H1 (cell line): ENCODE measurements at regions of chr10 and their contacts with region 1.

Region 1: GRCh38 chr10:63629363-63630084 is 108.3 kb downstream of the REEP3 start:
- DNase-seq: peak; percentile 90 to 96
- H3K4me3 ChIP-seq: peak overlapping the region; percentile 60 to 80 (median 72)
- H3K27ac ChIP-seq: peak overlapping the region; percentile 91
- H3K4me1 ChIP-seq: peaks cover 11 to 16% (median 13%) of the 10 kb centered on the region in 4 experiments; a peak in 6 of 7 replicates
- H3K27me3 ChIP-seq: no peaks in the 10 kb centered on the region
- CTCF ChIP-seq: peak; percentile 81 to 96 (median 92)
- EP300 ChIP-seq: peak in 1 of 2 experiments; percentile 5; a peak in 1 of 3 replicates
- POLR2A ChIP-seq: peak in 1 of 2 experiments; percentile 15; a peak in 1 of 3 replicates
- RAD21 ChIP-seq: peak; percentile 94 to 95

Region 2: GRCh38 chr10:63166742-63167258 is 462.7 kb before region 1 on chr10:
- CTCF ChIA-PET with region 1: interaction called, 41 read pairs
- POLR2A ChIA-PET with region 1: interaction called, 20 read pairs
- DNase-seq: no peak
- H3K4me3 ChIP-seq: no peak overlapping the region
- H3K27ac ChIP-seq: no peak overlapping the region
- H3K4me1 ChIP-seq: no peaks in the 10 kb centered on the region
- H3K27me3 ChIP-seq: no peaks in the 10 kb centered on the region
- CTCF ChIP-seq: peak in 2 of 3 experiments; percentile 55 to 72; a peak in 3 of 4 replicates
- EP300 ChIP-seq: no peak
- POLR2A ChIP-seq: peak in 1 of 2 experiments; percentile 57; a peak in 2 of 3 replicates
- RAD21 ChIP-seq: peak; percentile 69 to 72

Region 3: DNA sequence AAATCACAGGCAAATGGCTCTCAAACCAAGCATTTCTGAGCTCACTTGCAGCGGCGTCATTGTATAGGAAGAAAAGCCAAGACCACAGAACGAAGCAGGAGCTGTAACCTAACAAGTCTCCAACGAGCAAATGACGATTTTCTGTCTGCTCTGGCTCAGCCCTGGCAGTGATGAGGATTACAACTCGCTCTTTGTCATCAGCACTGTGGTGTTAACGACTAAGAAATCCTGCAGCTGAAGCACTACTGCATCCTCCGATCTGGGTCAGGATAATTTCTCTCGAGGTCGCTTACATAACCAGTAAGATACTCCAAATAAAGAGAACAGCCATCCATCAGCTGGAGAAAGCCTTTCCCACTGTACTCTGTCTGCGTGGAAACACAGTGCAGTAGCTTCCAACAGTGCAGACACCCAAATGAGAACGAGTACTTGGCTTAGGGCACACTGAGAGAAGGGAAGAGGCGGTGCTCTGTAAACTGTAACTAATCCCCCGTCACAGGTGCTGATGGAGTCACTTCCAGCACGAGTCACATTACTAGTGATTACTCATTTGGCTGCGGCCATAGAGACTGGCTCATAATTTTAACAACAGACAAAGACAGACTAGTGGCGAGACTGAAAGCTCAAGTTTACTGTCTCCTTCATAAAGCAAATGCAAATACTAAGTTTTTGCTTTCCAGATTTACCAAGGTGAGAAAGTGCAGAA is 360.6 kb before region 1 on chr10:
- CTCF ChIA-PET with region 1: interaction called, 7 read pairs
- POLR2A ChIA-PET with region 1: interaction called, 44 read pairs
- DNase-seq: peak; percentile 51 to 68
- H3K4me3 ChIP-seq: peak overlapping the region; percentile 78 to 96 (median 82)
- H3K27ac ChIP-seq: peak overlapping the region; percentile 83
- H3K4me1 ChIP-seq: no peaks in the 10 kb centered on the region; a peak in 1 of 7 replicates
- H3K27me3 ChIP-seq: no peaks in the 10 kb centered on the region
- CTCF ChIP-seq: no peak
- EP300 ChIP-seq: no peak
- POLR2A ChIP-seq: peak; percentile 88 to 97
- RAD21 ChIP-seq: no peak; a peak in 1 of 4 replicates

Region 4: GRCh38 chr10:63521416-63522276 is 107.9 kb before region 1 on chr10:
- CTCF ChIA-PET with region 1: interaction called, 26 read pairs
- POLR2A ChIA-PET with region 1: interaction called, 22 read pairs
- DNase-seq: peak in 1 of 2 experiments; percentile 85
- H3K4me3 ChIP-seq: peak overlapping the region; percentile 73 to 86 (median 82)
- H3K27ac ChIP-seq: peak overlapping the region; percentile 94
- H3K4me1 ChIP-seq: peaks cover 2 to 12% (median 10%) of the 10 kb centered on the region in 4 experiments; a peak in 4 of 7 replicates
- H3K27me3 ChIP-seq: no peaks in the 10 kb centered on the region
- CTCF ChIP-seq: no peak
- EP300 ChIP-seq: no peak
- POLR2A ChIP-seq: peak; percentile 68 to 93
- RAD21 ChIP-seq: peak in 1 of 2 experiments; percentile 0; a peak in 1 of 4 replicates

Region 5: DNA sequence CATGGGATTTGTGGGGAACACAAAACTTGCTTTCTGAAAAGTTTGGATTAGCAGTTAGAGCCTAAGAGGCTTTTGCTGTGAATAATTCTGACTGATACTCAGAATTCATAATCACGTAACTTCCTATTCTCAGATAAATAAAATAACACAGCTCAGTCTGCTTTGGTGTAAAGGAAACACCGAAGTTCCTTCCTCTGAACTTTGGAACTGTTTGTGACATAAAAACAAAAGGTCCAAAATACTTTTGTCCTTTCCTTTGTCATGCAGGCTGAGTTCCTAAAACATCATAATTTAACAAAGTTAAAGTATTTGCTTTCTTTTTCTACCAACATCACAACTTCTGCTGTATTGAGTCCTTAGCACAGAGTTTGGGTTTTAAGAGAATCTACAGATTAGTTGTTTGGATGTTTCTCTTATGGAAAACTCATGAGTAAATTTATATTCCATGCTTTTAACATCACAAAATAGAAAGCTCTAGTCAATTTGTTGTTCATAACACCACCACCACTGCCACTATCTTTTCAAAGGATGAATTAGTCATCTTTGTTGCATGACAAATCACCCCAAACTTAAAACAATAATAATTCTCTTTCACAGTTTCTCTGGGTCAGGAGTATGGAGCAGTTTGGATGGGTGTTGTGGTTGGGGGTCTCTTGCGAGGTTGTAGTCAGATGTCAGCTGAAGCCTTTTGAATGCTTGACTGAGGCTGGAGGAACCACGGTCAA is 15.1 kb after region 1 on chr10:
- CTCF ChIA-PET with region 1: interaction called, 7 read pairs
- POLR2A ChIA-PET with region 1: interaction called, 16 read pairs
- DNase-seq: no peak
- H3K4me3 ChIP-seq: no peak overlapping the region
- H3K27ac ChIP-seq: no peak overlapping the region
- H3K4me1 ChIP-seq: no peaks in the 10 kb centered on the region
- H3K27me3 ChIP-seq: no peaks in the 10 kb centered on the region
- CTCF ChIP-seq: no peak
- EP300 ChIP-seq: no peak
- POLR2A ChIP-seq: no peak
- RAD21 ChIP-seq: no peak

Region 6: DNA sequence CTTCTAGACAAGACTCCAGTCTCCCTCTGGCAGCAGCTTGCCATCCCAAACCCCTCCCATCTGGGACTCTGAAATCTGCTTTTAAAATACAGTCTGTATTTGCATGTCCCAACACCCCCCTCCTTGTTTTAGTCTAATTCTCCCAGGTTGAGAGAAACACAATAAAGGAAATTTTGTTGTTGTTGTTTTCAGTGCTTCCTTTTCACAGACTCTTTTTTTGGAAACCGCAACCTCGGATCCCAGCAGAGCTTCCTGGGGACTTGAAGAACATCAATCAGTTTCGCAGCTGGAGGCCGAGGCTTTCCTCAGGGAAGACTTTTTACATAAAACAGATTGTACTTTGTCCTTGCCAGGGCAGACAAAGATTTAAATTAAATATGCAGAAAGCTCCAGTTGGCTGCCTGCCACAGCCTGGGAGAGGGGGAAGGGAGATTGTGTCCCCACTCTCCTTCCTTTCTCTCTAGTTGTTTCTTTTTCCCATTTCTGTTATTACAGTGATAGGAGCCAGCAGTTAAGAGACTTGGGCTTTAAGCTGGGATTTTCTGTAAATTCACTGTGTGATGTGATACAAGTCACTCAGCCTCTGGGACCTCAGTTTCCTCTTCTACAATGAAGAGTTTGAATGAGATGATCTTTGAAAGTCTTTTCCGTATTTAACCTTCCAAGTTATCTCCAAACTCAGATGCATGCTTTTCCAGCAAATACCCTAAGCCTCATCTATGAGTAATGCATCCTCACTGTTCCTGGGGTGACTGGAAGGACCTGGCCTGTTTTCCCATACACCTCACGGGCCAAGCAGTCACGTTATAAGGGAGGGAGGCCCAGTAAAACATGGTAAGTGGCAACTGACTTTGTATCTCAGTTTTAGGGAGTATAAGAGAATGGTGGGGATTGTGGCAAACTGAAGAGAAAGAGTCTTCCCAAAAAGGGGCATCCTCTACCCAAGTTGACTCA is 83.9 kb after region 1 on chr10:
- CTCF ChIA-PET with region 1: interaction called, 68 read pairs
- POLR2A ChIA-PET with region 1: interaction called, 15 read pairs
- DNase-seq: peak; percentile 79 to 99
- H3K4me3 ChIP-seq: peak overlapping the region in 3 of 4 experiments; percentile 11 to 42 (median 27); a peak in 5 of 8 replicates
- H3K27ac ChIP-seq: peak overlapping the region; percentile 26; the same call in 1 of the 2 replicates
- H3K4me1 ChIP-seq: peaks cover 13 to 34% (median 24%) of the 10 kb centered on the region in 4 experiments
- H3K27me3 ChIP-seq: no peaks in the 10 kb centered on the region
- CTCF ChIP-seq: no peak
- EP300 ChIP-seq: peak in 1 of 2 experiments; percentile 78; a peak in 1 of 3 replicates
- POLR2A ChIP-seq: no peak
- RAD21 ChIP-seq: peak in 1 of 2 experiments; percentile 20; a peak in 1 of 4 replicates